PC-9 (cell line): ENCODE measurements at regions of chr5 and their contacts with region 1.

Region 1: GRCh38 chr5:7412409-7412808 is 16.5 kb downstream of the ADCY2 start:
- DNase-seq: no peak
- H3K4me3 ChIP-seq: no peak overlapping the region
- H3K27ac ChIP-seq: no peak overlapping the region
- H3K4me1 ChIP-seq: no peaks in the 10 kb centered on the region
- H3K27me3 ChIP-seq: peaks cover 66% of the 10 kb centered on the region
- CTCF ChIP-seq: no peak

Region 2: DNA sequence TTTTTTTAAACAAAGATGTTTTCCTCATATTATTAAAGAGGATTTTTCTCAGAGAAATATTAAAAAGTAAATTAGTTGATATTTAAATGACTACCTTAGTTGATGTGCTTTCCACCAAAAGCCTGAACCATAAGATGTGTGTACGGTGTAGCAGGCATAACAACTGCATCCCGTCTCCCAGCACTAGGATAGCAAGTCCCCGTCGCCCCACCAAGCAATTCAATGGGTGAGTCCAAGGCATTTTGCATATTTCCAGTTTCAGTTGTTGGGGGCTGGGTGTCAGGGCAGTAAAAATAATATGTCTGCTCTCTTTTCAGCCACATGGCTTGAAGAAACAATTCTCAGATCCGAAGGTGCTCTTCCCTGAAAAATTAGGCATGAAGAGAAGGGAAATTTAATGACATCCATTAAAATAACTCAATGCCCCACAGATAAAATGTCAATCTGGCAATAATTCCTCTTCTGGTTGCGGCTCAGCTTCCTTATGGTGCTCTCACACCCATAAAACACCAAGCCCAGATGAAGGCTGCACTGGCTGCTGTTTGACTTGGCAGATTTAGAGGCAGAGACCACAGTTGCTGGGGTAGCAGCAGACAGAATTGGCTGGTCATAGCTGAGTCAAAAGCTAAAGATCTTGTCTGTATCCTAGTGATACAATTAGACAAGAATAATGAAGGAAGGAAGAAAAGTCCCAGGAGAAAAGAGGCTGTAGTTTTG is 140.8 kb before region 1 on chr5:
- CTCF ChIA-PET with region 1: no interaction called
- POLR2A ChIA-PET with region 1: no interaction called
- intact Hi-C with region 1: no loop called
- DNase-seq: no peak
- H3K4me3 ChIP-seq: no peak overlapping the region
- H3K27ac ChIP-seq: no peak overlapping the region
- H3K4me1 ChIP-seq: no peaks in the 10 kb centered on the region
- H3K27me3 ChIP-seq: peaks cover 48% of the 10 kb centered on the region
- CTCF ChIP-seq: no peak

Region 3: GRCh38 chr5:7372399-7372798 is 40.0 kb before region 1 on chr5:
- CTCF ChIA-PET with region 1: no interaction called
- POLR2A ChIA-PET with region 1: no interaction called
- intact Hi-C with region 1: no loop called
- DNase-seq: no peak
- H3K4me3 ChIP-seq: no peak overlapping the region
- H3K27ac ChIP-seq: no peak overlapping the region
- H3K4me1 ChIP-seq: no peaks in the 10 kb centered on the region
- H3K27me3 ChIP-seq: peaks cover 18% of the 10 kb centered on the region; the same call in 1 of the 2 replicates
- CTCF ChIP-seq: no peak

Region 4: DNA sequence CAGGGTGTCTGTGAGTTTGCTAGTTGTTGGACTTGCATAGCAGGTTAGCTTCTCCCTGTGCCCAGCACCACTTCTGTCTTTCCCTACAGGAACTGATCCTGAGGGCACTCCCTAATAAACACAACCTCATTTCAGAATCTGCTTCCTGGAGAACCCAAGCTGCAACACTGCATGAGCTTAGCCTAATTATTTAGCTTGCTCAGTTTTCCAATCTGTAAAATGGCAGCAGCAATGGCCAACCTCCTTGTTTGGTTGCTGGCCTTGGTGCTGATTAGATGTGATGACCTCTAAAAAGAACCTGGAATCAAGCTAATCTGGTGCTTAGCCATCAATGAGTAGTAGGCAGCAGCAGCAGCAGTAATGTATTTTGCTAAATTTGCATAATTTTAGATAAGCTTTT is 117.5 kb after region 1 on chr5:
- CTCF ChIA-PET with region 1: no interaction called
- POLR2A ChIA-PET with region 1: no interaction called
- intact Hi-C with region 1: loop called (anchors 5 kb)
- DNase-seq: no peak
- H3K4me3 ChIP-seq: no peak overlapping the region
- H3K27ac ChIP-seq: no peak overlapping the region
- H3K4me1 ChIP-seq: no peaks in the 10 kb centered on the region
- H3K27me3 ChIP-seq: peaks cover 13% of the 10 kb centered on the region; the same call in 1 of the 2 replicates
- CTCF ChIP-seq: no peak